ENCODE measurements at regions of chr20 and their contacts with region 1.

Region 1: DNA sequence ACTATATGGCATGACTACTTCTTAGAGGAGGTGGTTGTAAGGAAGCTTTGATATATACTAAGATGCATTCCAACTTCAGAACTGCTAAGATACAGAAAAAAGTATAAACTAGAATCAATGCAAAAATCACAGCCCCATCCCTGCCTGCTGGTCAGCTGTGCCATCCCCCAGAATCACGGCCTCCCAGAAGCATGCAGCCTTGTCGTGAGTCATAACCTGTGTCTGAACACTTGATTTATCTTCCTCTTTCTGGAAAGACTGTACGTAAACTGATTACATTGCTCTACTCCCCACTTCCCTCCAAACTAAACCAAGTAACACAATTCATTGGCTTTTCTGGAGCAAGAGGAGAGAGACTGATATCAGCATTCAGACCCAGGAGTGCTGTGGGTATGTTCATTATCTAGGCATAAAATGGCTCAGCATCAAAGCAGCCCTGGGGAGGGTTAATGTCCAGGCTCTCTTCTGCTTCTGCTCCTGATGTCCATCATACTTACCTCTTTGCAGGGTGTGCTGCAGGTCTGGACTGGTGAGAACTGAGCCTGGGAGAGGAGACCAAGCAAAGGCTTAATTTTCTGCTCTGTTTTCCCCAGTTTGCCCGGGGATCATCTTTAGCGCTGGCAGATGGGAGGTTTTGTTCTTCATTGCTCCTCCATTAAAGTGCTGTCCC is 18.4 kb downstream of the SCP2D1 start:
- DNase-seq: no peak
- H3K4me3 ChIP-seq: no peak overlapping the region
- H3K27ac ChIP-seq: no peak overlapping the region
- H3K4me1 ChIP-seq: no peaks in the 10 kb centered on the region
- H3K27me3 ChIP-seq: no peaks in the 10 kb centered on the region
- CTCF ChIP-seq: no peak

Region 2: DNA sequence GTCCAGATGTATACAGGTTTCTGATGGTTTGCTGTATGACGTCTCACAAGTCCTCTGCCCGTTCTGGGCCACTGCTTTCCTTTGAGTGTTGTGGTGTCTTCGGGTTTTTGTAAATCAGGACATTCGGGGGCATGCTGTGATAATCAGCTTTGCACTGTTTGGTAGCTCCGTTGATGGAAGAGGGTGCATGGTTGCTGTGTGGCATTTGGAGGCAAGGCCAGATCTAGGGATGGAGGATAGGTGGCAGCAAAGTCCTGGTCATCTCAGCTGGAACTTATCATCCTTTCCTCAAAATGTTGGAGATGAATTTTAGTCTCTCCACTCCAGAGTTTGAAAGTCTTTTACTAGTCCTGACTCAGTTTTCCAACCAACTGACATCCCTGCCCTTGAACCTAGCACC is 72.7 kb after region 1 on chr20:
- dilution Hi-C with region 1: loop called (anchors 10 kb)
- DNase-seq: no peak
- H3K4me3 ChIP-seq: no peak overlapping the region
- H3K27ac ChIP-seq: no peak overlapping the region
- H3K4me1 ChIP-seq: no peaks in the 10 kb centered on the region
- H3K27me3 ChIP-seq: no peaks in the 10 kb centered on the region
- CTCF ChIP-seq: peak; percentile 27 to 86 (median 64)